RWPE1 (cell line): ENCODE measurements at regions of chr9 and their contacts with region 1.

Region 1: DNA sequence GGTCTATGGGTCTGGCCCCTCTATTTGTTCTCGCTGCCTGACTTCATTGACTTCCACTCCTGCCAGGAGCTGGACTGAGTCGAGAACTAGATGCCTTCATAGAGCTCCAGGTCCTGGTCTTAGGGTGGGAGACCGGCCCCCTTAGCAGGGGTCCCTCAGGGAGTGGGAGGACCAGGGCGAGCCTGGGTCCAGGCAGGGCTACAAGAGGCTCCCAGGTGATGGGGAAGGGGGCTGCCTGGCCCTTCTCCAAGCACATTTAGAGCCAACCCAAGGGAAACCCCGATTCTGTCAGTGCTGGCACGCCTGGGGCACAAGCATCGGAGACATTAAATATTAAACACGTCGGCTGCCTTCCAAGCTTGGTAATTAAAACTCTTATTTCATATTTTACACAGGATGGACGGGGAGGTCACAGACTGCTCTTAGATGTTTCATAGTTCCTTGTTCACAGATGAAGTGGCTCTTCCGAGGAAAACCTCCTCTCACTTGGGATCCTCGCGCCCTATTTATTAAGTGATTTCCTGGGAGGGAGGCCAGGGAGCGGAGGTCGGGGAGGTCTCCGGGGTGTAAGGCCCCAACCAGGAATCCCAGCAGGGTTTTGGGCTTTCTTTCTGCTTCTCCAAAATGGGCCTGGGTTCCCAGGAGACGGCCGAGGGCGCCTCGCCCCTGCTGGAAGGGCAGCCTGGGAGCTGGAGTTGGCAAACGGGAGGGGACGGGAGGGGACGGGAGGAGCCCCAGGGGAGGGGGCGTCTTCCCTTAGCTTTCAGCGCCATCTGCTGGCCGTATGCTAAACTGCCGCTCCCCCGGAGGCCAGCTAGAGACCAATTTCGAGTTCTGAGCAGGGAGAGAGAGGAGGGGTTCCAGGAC is 23.4 kb upstream of the ZBTB43 start:
- DNase-seq: peak; percentile 95
- H3K27ac ChIP-seq: no peak overlapping the region
- CTCF ChIP-seq: peak; percentile 99

Region 2: GRCh38 chr9:126611592-126612325 is 169.7 kb before region 1 on chr9:
- CTCF ChIA-PET with region 1: interaction called, 10 read pairs
- POLR2A ChIA-PET with region 1: no interaction called
- DNase-seq: peak; percentile 87
- H3K27ac ChIP-seq: no peak overlapping the region
- CTCF ChIP-seq: peak; percentile 98

Region 3: DNA sequence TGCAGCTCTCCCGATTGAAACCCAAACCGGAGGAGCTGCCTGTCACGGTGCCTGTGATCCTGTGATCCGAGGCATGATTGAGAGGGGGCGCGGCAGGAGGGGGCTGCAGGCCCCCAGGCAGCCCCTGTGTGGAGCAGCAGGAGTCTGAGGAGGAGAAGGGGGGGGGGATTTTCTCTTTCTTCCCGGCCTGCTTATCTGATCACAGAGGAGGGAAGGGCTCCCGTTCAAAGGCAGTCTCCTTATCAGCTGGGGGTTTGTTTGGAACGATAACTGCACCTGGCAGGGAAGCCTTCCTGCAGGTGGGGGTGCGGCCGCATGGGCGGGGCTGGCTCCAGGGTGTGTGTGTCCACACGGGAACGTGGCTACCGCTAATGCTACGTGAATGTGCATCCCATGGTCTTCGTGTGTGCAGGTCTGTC is 129.3 kb before region 1 on chr9:
- CTCF ChIA-PET with region 1: interaction called, 11 read pairs
- POLR2A ChIA-PET with region 1: no interaction called
- DNase-seq: no peak
- H3K27ac ChIP-seq: no peak overlapping the region
- CTCF ChIP-seq: no peak

Region 4: DNA sequence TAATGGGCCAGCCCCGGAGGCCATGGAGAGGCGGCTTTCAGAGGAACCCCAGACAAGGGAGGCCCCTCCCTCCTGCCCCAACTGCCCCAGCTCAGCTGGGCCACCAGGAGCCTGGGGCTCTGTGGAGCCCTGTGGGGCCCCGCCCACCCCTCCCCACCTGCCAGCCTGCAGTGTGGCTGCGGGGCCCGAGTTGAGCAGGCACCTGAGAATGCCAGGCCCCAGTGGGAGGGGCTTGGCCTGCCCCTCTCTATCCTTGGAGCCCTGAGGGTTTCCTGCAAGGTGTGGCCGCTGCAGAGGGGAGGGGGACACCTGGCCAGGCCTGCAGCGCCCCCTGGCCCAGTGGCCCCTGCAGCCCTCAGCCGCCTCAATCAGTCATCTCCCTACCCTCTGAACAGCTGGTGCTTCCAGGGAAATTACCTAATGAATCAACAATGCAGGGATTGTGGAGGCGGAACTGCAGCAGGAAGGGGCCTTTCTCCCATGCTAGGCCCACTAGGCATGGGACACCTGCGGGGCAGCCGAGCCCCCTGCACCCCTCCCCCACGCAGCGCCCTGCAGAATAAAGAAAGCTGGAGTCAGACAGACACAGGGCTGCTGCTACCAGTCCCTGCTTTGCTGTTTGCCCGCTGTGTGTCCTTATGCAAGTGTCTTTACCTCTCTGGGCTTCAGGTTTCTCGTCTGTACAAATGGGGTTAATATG is 119.7 kb before region 1 on chr9:
- CTCF ChIA-PET with region 1: interaction called, 16 read pairs
- POLR2A ChIA-PET with region 1: no interaction called
- DNase-seq: peak; percentile 96
- H3K27ac ChIP-seq: no peak overlapping the region
- CTCF ChIP-seq: no peak

Region 5: GRCh38 chr9:126791406-126792151 is 10.2 kb after region 1 on chr9:
- CTCF ChIA-PET with region 1: interaction called, 10 read pairs
- POLR2A ChIA-PET with region 1: no interaction called
- DNase-seq: peak; percentile 94
- H3K27ac ChIP-seq: peak overlapping the region; percentile 96
- CTCF ChIP-seq: no peak

Region 6: GRCh38 chr9:126806336-126806735 is 24.9 kb after region 1 on chr9:
- CTCF ChIA-PET with region 1: no interaction called
- POLR2A ChIA-PET with region 1: no interaction called
- DNase-seq: no peak
- H3K27ac ChIP-seq: peak overlapping the region; percentile 86
- CTCF ChIP-seq: no peak